Sigmoid colon (tissue), 7 donors: ENCODE measurements at regions of chr13 and their contacts with region 1.

Region 1: DNA sequence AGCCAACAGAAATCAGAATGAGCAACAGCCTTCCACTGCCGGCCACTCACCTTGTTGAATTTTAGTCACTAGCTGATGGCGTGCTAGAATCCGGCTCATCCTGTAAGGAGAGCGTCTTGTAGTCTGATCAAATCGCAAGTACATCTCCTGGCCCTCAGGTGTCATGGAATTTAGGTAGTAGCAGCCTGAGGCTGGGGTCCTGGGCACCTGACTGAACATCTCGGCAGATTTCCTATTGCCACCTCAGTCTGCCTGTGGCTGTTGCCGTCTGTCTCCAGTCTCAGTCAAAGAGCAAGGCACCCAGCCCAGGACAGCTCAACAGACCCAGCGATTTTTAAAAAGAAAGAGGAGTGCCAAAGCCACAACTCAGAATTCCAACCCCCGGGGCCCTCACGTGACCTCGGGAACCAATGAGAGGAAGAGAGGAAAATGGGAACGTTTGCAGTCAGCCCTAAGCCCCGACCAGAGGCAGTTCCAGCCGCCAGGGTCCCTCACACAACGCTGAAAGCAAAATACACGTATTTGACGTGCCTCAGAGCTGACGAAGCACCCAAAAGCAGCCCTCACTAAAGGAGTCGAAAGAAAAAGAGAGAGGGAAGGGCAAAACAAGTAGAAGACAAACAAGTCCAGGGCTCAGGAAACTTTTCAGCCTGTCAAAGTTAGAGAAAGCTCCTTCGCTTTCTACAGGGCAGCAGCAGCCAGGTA is at the start of gene STARD13:
- DNase-seq: peak; percentile 98
- H3K4me3 ChIP-seq: peak within 1 kb of the TSS; percentile 60 to 69 (median 62)
- H3K27ac ChIP-seq: peak within 1 kb of the TSS; percentile 89 to 94 (median 92)
- H3K4me1 ChIP-seq: peaks cover 0 to 56% (median 40%) of the 10 kb centered on the region in 4 donors
- H3K27me3 ChIP-seq: no peaks in the 10 kb centered on the region
- CTCF ChIP-seq: peak; percentile 35 to 64 (median 44)
- EP300 ChIP-seq: no peak
- POLR2A ChIP-seq: peak; percentile 89 to 90
- total RNA-seq, gene STARD13: 66.7 to 102 (median 81.8) TPM

Region 2: GRCh38 chr13:32850316-32851052 is 435.1 kb before region 1 on chr13:
- intact Hi-C with region 1: no loop called
- DNase-seq: no peak
- H3K4me3 ChIP-seq: no peak overlapping the region
- H3K27ac ChIP-seq: no peak overlapping the region
- H3K4me1 ChIP-seq: no peaks in the 10 kb centered on the region
- H3K27me3 ChIP-seq: no peaks in the 10 kb centered on the region
- CTCF ChIP-seq: no peak
- EP300 ChIP-seq: no peak
- POLR2A ChIP-seq: no peak

Region 3: DNA sequence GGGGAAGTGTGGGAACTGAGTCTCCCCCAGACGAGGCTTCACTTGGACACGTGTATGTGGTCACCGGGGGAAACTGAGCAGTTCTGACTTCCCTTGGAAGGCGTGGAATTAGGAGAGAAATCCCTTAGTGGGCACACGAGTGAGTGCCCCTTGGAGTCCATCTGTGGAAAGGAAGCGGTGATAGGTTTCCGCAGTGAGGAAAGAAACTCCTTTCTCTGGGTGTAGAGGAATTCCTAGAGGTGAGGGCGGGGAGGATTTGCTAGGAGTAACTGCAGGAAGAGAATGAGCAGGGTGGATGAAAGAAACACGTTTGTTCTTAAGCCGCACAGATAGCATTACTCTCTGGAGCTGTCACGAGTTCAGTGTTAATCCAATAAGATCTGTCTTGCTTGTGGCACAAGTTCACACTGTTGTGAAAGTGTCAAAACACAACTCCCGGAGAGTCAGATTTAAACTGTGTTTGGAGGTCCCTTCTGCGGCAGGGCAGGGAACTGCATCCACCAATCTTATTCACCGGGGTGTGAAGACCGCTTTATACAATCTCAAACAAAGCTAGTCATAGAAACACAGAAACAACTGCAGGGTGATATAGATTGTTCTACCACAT is 268.1 kb before region 1 on chr13:
- intact Hi-C with region 1: loop called (anchors 5 kb)
- DNase-seq: peak; percentile 84
- H3K4me3 ChIP-seq: peak overlapping the region; percentile 47 to 74 (median 62)
- H3K27ac ChIP-seq: peak overlapping the region; percentile 75 to 79 (median 77)
- H3K4me1 ChIP-seq: peaks cover 0 to 21% (median 12%) of the 10 kb centered on the region in 4 donors
- H3K27me3 ChIP-seq: no peaks in the 10 kb centered on the region
- CTCF ChIP-seq: peak; percentile 22 to 60 (median 51)
- EP300 ChIP-seq: no peak
- POLR2A ChIP-seq: no peak

Region 4: GRCh38 chr13:33125821-33126570 is 159.6 kb before region 1 on chr13:
- intact Hi-C with region 1: loop called (anchors 10 kb)
- DNase-seq: peak; percentile 89
- H3K4me3 ChIP-seq: no peak overlapping the region
- H3K27ac ChIP-seq: peak overlapping the region; percentile 82 to 87 (median 85)
- H3K4me1 ChIP-seq: peaks cover 0 to 63% (median 60%) of the 10 kb centered on the region in 4 donors
- H3K27me3 ChIP-seq: no peaks in the 10 kb centered on the region
- CTCF ChIP-seq: no peak
- EP300 ChIP-seq: no peak
- POLR2A ChIP-seq: no peak

Region 5: GRCh38 chr13:33228648-33229445 is 56.7 kb before region 1 on chr13:
- intact Hi-C with region 1: loop called (anchors 5 kb)
- DNase-seq: no peak
- H3K4me3 ChIP-seq: no peak overlapping the region
- H3K27ac ChIP-seq: peak overlapping the region; percentile 66 to 80 (median 71)
- H3K4me1 ChIP-seq: peaks cover 0 to 65% (median 54%) of the 10 kb centered on the region in 4 donors
- H3K27me3 ChIP-seq: no peaks in the 10 kb centered on the region
- CTCF ChIP-seq: peak; percentile 80 to 87 (median 82)
- EP300 ChIP-seq: no peak
- POLR2A ChIP-seq: no peak

Region 6: DNA sequence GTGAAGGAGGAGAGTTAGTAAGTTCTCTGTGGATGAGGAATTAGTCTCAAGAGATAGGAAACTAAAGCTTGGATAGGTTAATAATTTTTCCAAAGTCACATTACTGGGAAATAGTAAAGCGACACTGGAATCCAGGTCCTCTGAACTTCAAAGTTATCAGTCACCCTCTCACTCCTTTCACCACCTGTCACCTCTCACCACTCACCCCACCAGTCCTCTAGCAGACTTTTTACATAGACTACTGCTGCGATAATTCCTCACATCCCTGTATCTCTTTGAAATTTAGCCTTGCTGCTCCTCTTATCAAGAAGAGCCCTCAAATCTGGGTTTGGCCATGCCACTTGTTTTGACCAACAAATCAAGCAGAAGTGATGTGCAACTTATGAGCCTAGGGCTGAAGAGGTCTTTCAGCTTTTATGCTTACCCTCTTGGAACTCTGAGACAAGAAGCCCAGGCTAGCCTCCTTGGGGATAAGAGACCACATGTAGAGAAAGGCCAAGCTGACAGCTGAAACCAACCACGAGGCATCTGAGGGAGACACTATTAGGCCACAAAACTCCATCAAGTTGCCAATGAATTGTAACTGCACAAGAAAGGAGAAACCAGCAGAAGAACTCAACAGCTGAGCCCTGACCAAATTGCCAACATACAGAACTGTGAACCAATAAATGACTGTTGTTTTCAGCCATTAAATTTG is 41.2 kb before region 1 on chr13:
- intact Hi-C with region 1: no loop called
- DNase-seq: no peak
- H3K4me3 ChIP-seq: no peak overlapping the region
- H3K27ac ChIP-seq: no peak overlapping the region
- H3K4me1 ChIP-seq: peaks cover 0 to 5% (median 0%) of the 10 kb centered on the region in 4 donors
- H3K27me3 ChIP-seq: no peaks in the 10 kb centered on the region
- CTCF ChIP-seq: no peak
- EP300 ChIP-seq: no peak
- POLR2A ChIP-seq: no peak

Region 7: DNA sequence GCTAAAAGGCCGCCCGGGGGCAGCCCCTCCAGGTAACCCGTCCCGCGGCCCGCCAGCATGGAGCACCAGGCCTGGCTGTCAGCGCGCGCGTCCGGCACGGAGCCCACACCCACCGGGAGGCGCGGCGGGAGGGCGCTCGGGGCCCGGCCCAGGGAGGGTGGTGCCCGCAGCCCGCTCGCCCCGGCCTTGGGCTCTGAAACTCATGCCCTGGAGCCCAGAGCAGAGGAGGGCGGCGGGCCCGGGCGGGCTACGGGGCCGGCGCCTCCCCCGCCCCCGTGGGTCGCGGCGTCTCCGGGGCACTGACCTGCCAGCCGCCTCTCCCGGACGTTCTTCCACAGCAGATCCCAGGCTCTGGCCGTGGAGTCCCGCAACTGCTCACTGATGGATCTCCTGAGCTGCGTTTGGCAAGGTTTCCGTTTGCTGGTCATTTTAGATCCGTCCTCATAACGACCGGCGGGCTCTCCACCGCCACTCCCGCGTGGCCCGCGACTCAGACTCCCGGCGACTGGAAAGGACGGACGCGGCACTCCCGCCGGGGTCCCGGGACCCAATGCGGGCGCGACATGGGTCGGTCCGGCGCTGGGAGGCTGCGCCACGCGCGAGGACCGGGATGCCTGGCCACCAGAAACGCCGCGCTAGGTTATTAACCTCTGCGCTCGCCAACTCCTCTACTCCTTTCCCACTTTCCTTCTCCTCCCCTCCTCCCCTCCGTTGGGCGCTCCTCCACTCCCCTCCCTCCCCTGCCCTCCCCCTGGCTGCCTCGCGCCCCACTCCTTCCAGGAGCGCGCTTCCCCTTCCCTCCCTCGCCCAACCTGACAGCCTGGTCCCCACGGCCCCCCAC is 64.6 kb after region 1 on chr13:
- intact Hi-C with region 1: loop called (anchors 5 kb)
- DNase-seq: peak; percentile 88
- H3K4me3 ChIP-seq: peak overlapping the region; percentile 62 to 81 (median 71)
- H3K27ac ChIP-seq: peak overlapping the region; percentile 88 to 96 (median 93)
- H3K4me1 ChIP-seq: peaks cover 0 to 44% (median 25%) of the 10 kb centered on the region in 4 donors
- H3K27me3 ChIP-seq: no peaks in the 10 kb centered on the region
- CTCF ChIP-seq: no peak
- EP300 ChIP-seq: no peak
- POLR2A ChIP-seq: peak; percentile 4 to 20

Region 8: GRCh38 chr13:33401238-33401637 is 115.7 kb after region 1 on chr13:
- intact Hi-C with region 1: loop called (anchors 5 kb)
- DNase-seq: peak; percentile 81
- H3K4me3 ChIP-seq: no peak overlapping the region
- H3K27ac ChIP-seq: peak overlapping the region in 3 of 4 donors; percentile 50 to 72 (median 68)
- H3K4me1 ChIP-seq: peaks cover 0 to 41% (median 29%) of the 10 kb centered on the region in 4 donors
- H3K27me3 ChIP-seq: no peaks in the 10 kb centered on the region
- CTCF ChIP-seq: peak in 1 of 4 experiments; percentile 8
- EP300 ChIP-seq: no peak
- POLR2A ChIP-seq: no peak

Region 9: GRCh38 chr13:33446821-33447725 is 161.5 kb after region 1 on chr13:
- intact Hi-C with region 1: loop called (anchors 5 kb)
- DNase-seq: no peak
- H3K4me3 ChIP-seq: no peak overlapping the region
- H3K27ac ChIP-seq: peak overlapping the region in 3 of 4 donors; percentile 1 to 58 (median 11)
- H3K4me1 ChIP-seq: peaks cover 0 to 40% (median 25%) of the 10 kb centered on the region in 4 donors
- H3K27me3 ChIP-seq: no peaks in the 10 kb centered on the region
- CTCF ChIP-seq: no peak
- EP300 ChIP-seq: no peak
- POLR2A ChIP-seq: no peak

Region 10: GRCh38 chr13:33642374-33643068 is 356.9 kb after region 1 on chr13:
- intact Hi-C with region 1: no loop called
- DNase-seq: peak; percentile 94
- H3K4me3 ChIP-seq: no peak overlapping the region
- H3K27ac ChIP-seq: peak overlapping the region; percentile 59 to 71 (median 64)
- H3K4me1 ChIP-seq: peaks cover 0 to 33% (median 22%) of the 10 kb centered on the region in 4 donors
- H3K27me3 ChIP-seq: no peaks in the 10 kb centered on the region
- CTCF ChIP-seq: no peak
- EP300 ChIP-seq: peak in 2 of 4 donors; percentile 3 to 19
- POLR2A ChIP-seq: no peak